ENCODE measurements at regions of chr9 and their contacts with region 1.

Region 1: DNA sequence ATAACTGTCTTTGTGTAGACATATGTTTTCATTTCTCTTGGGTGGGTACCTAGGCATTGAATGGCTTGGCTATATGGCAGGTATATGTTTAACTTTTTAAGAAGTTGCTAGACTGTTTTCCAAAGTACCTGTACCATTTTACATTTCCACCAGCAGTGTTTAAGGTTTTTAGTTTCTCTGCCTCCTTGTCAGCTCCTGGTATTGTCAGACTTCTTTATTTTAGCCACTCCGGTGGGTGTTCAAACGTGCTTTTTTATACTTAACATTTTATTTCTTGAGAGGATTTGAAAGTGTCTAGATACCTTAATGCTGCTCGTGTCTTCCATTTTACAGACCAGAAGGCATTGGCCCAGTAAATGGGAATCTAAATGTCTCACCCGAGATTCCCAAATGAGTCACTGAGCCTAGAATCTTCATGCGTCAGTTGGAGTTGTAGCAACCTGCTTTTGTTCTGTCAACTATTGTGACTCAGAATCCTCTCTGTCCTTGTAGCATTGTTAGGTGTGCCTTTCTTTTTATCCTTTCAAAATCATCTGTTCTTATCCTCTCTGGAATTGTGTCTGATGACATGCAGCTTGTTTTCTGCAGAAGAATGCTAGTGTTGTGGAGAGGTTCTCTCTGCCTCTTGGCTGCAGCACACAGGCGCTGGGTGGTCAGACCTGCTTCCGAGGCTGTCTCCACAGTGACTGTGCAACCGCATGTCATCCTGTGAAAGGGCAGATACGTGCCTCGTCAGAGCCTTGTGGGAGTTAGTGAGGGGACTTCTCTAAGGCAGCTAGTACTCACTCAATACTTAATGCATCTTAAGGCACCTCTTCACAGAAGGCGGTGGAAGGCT is 291.8 kb downstream of the AOPEP start:
- DNase-seq: peak; percentile 39
- CTCF ChIP-seq: no peak

Region 2: GRCh38 chr9:95031711-95032461 is 13.6 kb after region 1 on chr9:
- CTCF ChIA-PET with region 1: interaction called, 11 read pairs
- POLR2A ChIA-PET with region 1: no interaction called
- DNase-seq: no peak
- CTCF ChIP-seq: no peak

Measured in GM10248 (cell line).